ENCODE measurements at regions of chr9 and their contacts with region 1.

Region 1: DNA sequence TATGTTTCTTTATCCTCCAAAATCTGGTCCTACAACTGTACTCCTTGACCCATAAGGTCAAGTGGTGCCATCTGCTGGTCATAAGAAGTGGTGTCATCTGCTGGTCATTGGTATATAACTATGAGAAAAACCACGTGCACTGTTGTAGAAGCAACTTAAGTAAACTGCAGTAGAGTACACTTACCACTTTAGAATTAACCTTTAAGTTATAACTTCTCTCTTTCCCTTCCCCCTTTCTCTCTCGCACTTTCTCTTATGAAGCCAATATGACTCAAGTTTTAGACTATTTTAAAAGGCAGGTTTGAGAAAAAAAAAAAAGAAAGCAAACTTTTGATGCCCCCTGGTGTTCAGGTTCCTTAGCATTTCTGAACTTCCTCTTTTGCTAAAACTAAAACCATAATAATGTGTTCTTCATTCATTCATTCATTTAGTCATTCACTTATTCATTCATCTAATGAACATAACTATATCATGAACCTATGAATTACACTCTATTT is 12.8 kb upstream of the MTAP start:
- DNase-seq: peak; percentile 60
- H3K4me3 ChIP-seq: no peak overlapping the region
- H3K27ac ChIP-seq: no peak overlapping the region
- H3K4me1 ChIP-seq: no peaks in the 10 kb centered on the region
- H3K27me3 ChIP-seq: no peaks in the 10 kb centered on the region
- CTCF ChIP-seq: peak; percentile 82

Region 2: GRCh38 chr9:21317956-21318923 is 471.3 kb before region 1 on chr9:
- intact Hi-C with region 1: loop called (anchors 10 kb)
- DNase-seq: peak; percentile 47
- H3K4me3 ChIP-seq: no peak overlapping the region
- H3K27ac ChIP-seq: no peak overlapping the region
- H3K4me1 ChIP-seq: no peaks in the 10 kb centered on the region
- H3K27me3 ChIP-seq: no peaks in the 10 kb centered on the region
- CTCF ChIP-seq: peak; percentile 57

Region 3: DNA sequence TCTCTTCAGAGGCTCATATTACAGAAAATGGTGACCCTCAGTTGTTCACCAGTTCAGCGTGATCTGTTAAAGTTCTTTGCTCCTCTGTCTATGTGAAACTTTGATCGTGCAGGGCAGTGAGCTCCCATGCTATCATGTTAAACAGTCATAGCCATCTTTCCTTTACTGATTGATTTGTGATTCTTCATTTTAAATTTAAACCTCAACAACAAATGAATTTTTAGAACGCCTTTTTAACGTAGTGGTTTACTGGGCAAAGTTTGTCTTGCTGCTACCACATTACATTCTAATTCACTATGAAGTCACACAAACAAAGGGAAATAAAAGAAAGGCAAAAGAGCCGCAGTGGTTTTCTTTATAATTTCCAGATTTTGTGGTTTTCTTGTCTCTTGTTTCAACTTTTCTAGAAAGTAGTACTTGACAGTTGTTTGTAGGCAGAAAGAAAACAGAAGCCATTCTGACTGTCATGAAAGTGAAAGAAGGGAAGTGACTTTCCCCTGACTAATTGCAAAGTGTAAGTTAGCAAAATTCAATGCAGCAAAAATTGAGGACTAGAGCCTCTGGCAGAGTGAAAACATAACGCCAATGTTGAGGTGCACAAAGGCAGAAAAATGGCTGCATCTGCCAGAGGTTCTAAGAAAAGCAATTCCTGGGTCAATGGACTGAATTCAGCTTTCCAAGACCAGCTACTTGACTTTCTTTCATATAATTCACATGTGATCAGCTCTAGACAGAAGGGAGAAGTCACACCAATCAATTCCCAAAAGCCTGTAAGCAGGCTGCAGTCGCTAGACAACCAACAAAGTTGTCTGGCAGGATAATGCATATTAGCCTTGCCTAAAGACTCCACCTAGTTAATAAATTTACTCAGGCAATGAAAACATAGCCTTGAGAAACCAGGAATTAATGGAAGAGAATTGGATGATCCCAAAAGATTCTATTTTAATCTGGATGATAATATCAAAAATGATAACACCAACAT is 431.8 kb before region 1 on chr9:
- intact Hi-C with region 1: no loop called
- DNase-seq: no peak
- H3K4me3 ChIP-seq: no peak overlapping the region
- H3K27ac ChIP-seq: no peak overlapping the region
- H3K4me1 ChIP-seq: no peaks in the 10 kb centered on the region
- H3K27me3 ChIP-seq: no peaks in the 10 kb centered on the region
- CTCF ChIP-seq: no peak

Region 4: DNA sequence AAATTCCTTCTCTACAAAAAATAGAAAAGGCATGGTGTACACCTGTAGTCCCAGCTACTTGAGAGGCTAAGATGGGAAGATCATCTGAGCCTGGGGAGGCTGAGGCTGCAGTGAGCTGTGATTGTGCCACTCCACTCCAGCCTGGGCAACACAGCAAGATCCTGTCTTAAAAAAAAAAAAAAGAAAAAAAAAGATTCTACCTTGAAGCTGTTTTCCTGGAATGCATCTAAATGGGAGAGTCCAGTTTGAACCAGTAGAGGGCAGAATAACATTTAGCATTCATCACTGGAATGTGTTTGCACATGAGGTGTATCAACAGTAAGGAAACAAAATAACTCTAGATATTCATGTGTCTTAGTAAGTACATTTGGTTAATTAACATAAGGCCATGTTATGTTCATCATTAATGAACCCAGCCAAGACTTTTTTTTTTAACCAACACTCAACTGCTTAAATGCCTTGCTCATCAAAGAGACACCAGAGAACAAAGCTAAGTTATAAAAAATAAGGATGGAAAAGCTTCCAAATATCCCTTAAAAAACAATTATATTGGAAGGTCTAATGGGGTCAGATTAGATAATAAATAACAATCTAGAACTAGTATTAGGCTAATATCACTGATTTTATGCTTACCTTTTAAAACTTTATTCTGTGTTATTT is 323.6 kb before region 1 on chr9:
- intact Hi-C with region 1: loop called (anchors 5 kb)
- DNase-seq: peak; percentile 27
- H3K4me3 ChIP-seq: no peak overlapping the region
- H3K27ac ChIP-seq: no peak overlapping the region
- H3K4me1 ChIP-seq: no peaks in the 10 kb centered on the region
- H3K27me3 ChIP-seq: no peaks in the 10 kb centered on the region
- CTCF ChIP-seq: peak; percentile 72

Region 5: DNA sequence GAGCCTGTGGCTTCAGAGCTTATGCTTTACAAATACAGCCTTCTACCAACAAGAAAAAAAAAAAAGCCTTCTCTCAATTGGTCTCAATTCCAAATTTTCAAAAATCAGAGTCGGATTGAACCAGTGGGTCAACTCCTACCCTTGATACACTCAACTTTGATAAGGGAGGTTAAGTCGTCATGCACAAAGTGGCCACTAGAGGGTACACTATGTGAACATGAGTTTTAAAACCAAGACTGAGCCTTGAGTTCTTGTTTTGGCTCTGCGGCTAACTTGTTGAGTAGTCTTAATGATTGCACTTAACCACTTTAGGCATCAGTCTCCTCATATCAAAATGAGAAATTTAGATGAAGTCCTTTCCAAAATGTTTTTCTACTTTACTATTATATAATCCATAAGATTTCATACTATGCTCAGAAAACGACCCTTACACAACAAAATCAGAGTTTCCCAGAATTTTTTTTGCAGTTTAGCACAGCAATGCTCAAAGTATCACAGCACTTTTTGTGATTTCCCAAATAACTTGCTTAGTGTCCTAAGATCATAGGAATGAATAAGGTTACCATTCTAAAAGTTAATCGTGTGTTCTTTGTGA is 80.0 kb before region 1 on chr9:
- intact Hi-C with region 1: loop called (anchors 10 kb)
- DNase-seq: peak; percentile 70
- H3K4me3 ChIP-seq: no peak overlapping the region
- H3K27ac ChIP-seq: no peak overlapping the region
- H3K4me1 ChIP-seq: no peaks in the 10 kb centered on the region
- H3K27me3 ChIP-seq: no peaks in the 10 kb centered on the region
- CTCF ChIP-seq: peak; percentile 76